Caco-2 (cell line): ENCODE measurements at regions of chr13 and their contacts with region 1.

Region 1: DNA sequence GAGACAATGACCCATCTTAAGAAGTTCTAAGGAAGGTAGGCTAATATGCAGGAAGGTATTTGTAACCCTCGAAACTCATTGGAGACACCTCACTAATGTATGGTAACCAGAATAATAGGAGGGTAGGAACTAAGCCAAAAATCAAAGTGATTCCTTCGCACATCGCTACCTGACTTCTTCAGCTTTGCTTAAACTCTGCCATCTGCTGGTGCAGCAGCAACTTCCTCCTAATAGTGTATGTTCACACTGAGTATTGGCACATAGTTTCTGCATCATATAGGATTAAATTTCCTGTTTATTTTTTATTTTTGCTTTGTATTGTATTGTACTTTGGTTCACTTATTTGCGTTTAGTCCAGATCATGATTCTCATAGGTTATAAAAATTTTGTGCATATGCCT is 676.2 kb downstream of the GPC5 start:
- DNase-seq: peak in 1 of 2 experiments; percentile 42
- H3K4me3 ChIP-seq: no peak overlapping the region
- H3K4me3 Mint-ChIP-seq: no peak overlapping the region
- H3K27ac Mint-ChIP-seq: no peak overlapping the region
- H3K4me1 ChIP-seq: peaks cover 6% of the 10 kb centered on the region; the same call in 1 of the 2 replicates
- H3K4me1 Mint-ChIP-seq: no peaks in the 10 kb centered on the region
- H3K27me3 ChIP-seq: no peaks in the 10 kb centered on the region
- H3K27me3 Mint-ChIP-seq: no peaks in the 10 kb centered on the region
- CTCF ChIP-seq: peak; percentile 70 to 76

Region 2: GRCh38 chr13:91817250-91817649 is 257.4 kb before region 1 on chr13:
- CTCF ChIA-PET with region 1: interaction called, 4 read pairs
- POLR2A ChIA-PET with region 1: no interaction called
- intact Hi-C with region 1: loop called (anchors 2 kb)
- DNase-seq: peak in 1 of 2 experiments; percentile 5
- H3K4me3 ChIP-seq: no peak overlapping the region
- H3K4me3 Mint-ChIP-seq: no peak overlapping the region
- H3K27ac Mint-ChIP-seq: no peak overlapping the region
- H3K4me1 ChIP-seq: no peaks in the 10 kb centered on the region
- H3K4me1 Mint-ChIP-seq: no peaks in the 10 kb centered on the region
- H3K27me3 ChIP-seq: no peaks in the 10 kb centered on the region
- H3K27me3 Mint-ChIP-seq: peaks cover 8% of the 10 kb centered on the region
- CTCF ChIP-seq: peak in 1 of 2 experiments; percentile 9

Region 3: DNA sequence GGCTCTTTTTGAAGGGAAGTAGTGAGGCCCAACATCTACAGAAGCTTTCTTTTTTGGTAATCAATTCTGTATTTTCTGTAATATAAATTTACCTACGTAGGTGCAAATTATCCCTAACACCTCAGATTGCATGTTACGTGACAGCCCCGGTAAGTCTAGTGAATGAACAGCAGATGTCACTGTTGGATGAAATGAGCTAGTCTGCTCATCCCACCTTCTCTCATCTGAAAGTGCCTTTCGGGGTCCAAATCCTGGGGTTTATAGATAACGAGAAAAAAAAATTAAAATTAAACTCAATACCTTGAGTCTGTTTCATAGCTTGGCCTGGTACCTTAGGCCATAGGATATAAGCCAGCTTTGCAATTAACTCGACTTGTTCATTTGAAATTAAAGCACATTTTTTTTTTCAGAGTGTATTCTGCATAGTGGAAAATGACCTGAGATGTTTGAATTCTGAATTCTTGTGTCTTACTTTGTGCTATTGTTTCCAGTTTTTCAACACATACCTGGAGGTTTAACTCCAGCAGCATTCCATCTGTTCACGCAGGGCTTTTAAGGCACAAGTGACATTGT is 128.1 kb before region 1 on chr13:
- CTCF ChIA-PET with region 1: interaction called, 7 read pairs
- POLR2A ChIA-PET with region 1: no interaction called
- intact Hi-C with region 1: loop called (anchors 1 kb)
- DNase-seq: peak in 1 of 2 experiments; percentile 26
- H3K4me3 ChIP-seq: no peak overlapping the region
- H3K4me3 Mint-ChIP-seq: no peak overlapping the region
- H3K27ac Mint-ChIP-seq: no peak overlapping the region
- H3K4me1 ChIP-seq: no peaks in the 10 kb centered on the region
- H3K4me1 Mint-ChIP-seq: no peaks in the 10 kb centered on the region
- H3K27me3 ChIP-seq: no peaks in the 10 kb centered on the region
- H3K27me3 Mint-ChIP-seq: peaks cover 8% of the 10 kb centered on the region
- CTCF ChIP-seq: peak; percentile 67 to 81

Region 4: DNA sequence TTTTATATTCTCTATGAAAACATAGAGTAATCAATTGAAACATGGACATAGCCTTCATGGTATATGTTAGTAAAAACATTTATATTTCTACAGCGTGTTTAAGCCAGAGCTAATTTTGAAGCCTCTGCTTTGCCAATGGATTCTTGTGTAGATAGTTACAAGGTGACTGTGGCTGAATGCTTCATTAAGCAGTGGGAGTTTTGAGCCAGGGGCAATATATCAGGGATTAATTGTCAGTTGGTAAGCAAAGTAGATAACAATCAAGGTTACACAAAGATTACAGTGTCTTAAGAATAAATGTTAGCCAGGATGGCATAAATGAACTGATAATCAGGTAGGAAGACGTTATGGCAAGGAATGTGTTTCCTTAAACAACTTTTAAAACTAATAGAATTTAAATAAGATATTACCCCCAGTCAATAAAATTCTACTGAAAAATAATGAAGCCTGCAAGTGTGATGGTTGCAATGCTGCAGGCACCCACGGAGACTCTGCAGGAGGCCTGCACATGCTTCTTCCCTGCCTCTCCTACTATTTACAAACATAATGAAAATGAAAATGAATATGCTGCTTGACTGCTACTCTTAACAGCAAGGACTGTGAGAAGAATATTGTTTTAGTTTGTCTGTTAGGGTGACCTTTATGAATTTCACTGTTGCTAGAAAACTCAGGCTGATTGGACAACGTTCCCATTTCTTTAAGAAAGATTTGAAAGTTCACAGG is 87.7 kb before region 1 on chr13:
- CTCF ChIA-PET with region 1: no interaction called
- POLR2A ChIA-PET with region 1: no interaction called
- intact Hi-C with region 1: loop called (anchors 5 kb)
- DNase-seq: no peak
- H3K4me3 ChIP-seq: no peak overlapping the region
- H3K4me3 Mint-ChIP-seq: no peak overlapping the region
- H3K27ac Mint-ChIP-seq: no peak overlapping the region
- H3K4me1 ChIP-seq: no peaks in the 10 kb centered on the region
- H3K4me1 Mint-ChIP-seq: no peaks in the 10 kb centered on the region
- H3K27me3 ChIP-seq: no peaks in the 10 kb centered on the region
- H3K27me3 Mint-ChIP-seq: no peaks in the 10 kb centered on the region
- CTCF ChIP-seq: no peak

Region 5: DNA sequence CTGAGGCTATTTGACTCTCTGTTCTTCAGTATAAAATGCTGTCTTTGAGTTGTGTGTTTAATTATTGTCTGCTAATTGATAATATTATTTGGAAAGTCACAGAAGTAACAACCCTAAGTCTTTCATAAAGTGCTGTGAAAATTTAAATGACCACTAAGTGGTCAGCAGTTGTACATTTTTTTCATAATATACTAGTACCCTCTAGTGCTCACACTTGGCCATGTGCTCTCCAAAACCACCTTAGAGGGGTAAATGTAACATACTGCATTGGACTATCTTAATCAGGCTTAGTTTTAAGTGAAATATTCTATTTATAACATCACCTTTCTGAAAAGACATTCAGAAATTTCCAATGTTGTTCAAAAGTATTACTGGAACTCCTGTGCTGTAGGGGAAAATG is 69.1 kb after region 1 on chr13:
- CTCF ChIA-PET with region 1: no interaction called
- POLR2A ChIA-PET with region 1: no interaction called
- intact Hi-C with region 1: loop called (anchors 1 kb)
- DNase-seq: peak in 1 of 2 experiments; percentile 22
- H3K4me3 ChIP-seq: no peak overlapping the region
- H3K4me3 Mint-ChIP-seq: no peak overlapping the region
- H3K27ac Mint-ChIP-seq: no peak overlapping the region
- H3K4me1 ChIP-seq: no peaks in the 10 kb centered on the region
- H3K4me1 Mint-ChIP-seq: no peaks in the 10 kb centered on the region
- H3K27me3 ChIP-seq: no peaks in the 10 kb centered on the region
- H3K27me3 Mint-ChIP-seq: no peaks in the 10 kb centered on the region
- CTCF ChIP-seq: peak in 1 of 2 experiments; percentile 43